ENCODE measurements at regions of chr18 and their contacts with region 1.

Region 1: DNA sequence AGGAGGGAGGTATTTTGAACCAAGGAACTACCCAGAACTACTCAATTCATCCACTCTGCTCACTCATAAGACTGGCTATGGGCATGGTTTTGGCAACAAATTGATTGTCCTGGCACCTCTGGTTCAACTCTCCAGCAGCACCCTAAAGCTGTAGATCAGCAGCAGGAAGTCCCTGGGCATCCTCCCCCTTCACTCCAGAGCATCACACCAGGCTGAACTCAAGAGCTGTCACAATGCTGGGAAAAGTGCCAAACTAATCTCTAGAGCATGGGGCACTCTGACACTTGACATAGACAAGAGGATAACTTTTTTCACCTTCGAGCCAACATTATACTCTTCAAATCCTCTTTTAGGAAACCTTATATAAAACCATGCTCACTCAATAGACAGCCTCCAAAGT is 154.1 kb upstream of the RBBP8 start:
- DNase-seq: peak; percentile 20
- H3K4me3 ChIP-seq: no peak overlapping the region
- H3K27ac ChIP-seq: no peak overlapping the region
- H3K4me1 ChIP-seq: no peaks in the 10 kb centered on the region
- H3K27me3 ChIP-seq: no peaks in the 10 kb centered on the region
- CTCF ChIP-seq: no peak
- POLR2A ChIP-seq: no peak

Region 2: GRCh38 chr18:22723773-22724172 is 55.2 kb before region 1 on chr18:
- intact Hi-C with region 1: loop called (anchors 10 kb)
- DNase-seq: no peak
- H3K4me3 ChIP-seq: no peak overlapping the region
- H3K27ac ChIP-seq: no peak overlapping the region
- H3K4me1 ChIP-seq: no peaks in the 10 kb centered on the region
- H3K27me3 ChIP-seq: no peaks in the 10 kb centered on the region
- CTCF ChIP-seq: no peak
- POLR2A ChIP-seq: no peak

Measured in testis (tissue), 5 donors.